CD4-positive, alpha-beta memory T cell (primary cell): ENCODE measurements at regions of chr22 and their contacts with region 1.

Region 1: GRCh38 chr22:39932918-39933649 is 27.1 kb upstream of the TMA7B start:
- DNase-seq: peak in 4 of 5 donors; percentile 55 to 61 (median 58)
- H3K4me3 ChIP-seq: no peak overlapping the region
- H3K4me3 Mint-ChIP-seq: peak overlapping the region; percentile 61 to 88 (median 79)
- H3K27ac ChIP-seq: peak overlapping the region; percentile 53
- H3K27ac Mint-ChIP-seq: peak overlapping the region in 6 of 7 donors; percentile 92 to 97 (median 96)
- H3K4me1 ChIP-seq: peaks cover 100% of the 10 kb centered on the region
- H3K4me1 Mint-ChIP-seq: peaks cover 55 to 56% (median 55%) of the 10 kb centered on the region in 4 donors
- H3K27me3 ChIP-seq: no peaks in the 10 kb centered on the region
- H3K27me3 Mint-ChIP-seq: no peaks in the 10 kb centered on the region

Region 2: DNA sequence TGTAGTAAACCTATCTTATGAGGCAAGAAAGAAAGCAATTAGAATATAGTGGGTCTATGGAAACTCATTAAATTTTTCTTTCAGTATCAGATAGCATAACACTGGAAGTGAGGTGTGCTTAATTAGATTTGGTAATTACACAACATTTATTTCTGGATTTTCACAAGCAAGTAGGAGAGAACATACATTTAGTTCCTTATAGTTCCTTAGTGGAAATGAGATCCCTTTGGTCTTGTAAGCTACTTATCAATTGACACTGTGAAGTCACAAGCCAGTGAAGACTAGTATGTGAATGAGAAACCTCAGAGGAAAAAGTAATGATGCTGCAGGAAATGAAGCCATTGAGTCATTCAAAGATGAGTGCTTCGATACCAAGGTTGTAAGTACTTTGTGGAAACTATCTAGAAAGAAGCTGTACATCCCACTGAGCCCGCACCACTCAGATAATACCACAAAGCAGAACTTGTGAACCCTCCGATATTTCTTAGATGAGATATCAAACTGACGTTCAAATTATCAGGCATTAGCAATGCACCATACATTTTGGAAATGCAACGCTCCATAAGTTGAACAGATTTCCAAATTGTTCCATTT is 93.1 kb before region 1 on chr22:
- CTCF ChIA-PET with region 1: no interaction called
- POLR2A ChIA-PET with region 1: no interaction called
- intact Hi-C with region 1: loop called (anchors 10 kb)
- DNase-seq: peak; percentile 20 to 69 (median 26)
- H3K4me3 ChIP-seq: no peak overlapping the region
- H3K4me3 Mint-ChIP-seq: peak overlapping the region in 6 of 8 donors; percentile 3 to 33 (median 17)
- H3K27ac ChIP-seq: no peak overlapping the region
- H3K27ac Mint-ChIP-seq: peak overlapping the region in 1 of 7 donors; percentile 1
- H3K4me1 ChIP-seq: peaks cover 14% of the 10 kb centered on the region
- H3K4me1 Mint-ChIP-seq: peaks cover 12 to 16% (median 15%) of the 10 kb centered on the region in 4 donors
- H3K27me3 ChIP-seq: no peaks in the 10 kb centered on the region
- H3K27me3 Mint-ChIP-seq: no peaks in the 10 kb centered on the region

Region 3: GRCh38 chr22:39859903-39860588 is 73.0 kb before region 1 on chr22:
- CTCF ChIA-PET with region 1: no interaction called
- POLR2A ChIA-PET with region 1: no interaction called
- intact Hi-C with region 1: no loop called
- DNase-seq: no peak
- H3K4me3 ChIP-seq: no peak overlapping the region
- H3K4me3 Mint-ChIP-seq: peak overlapping the region in 6 of 8 donors; percentile 7 to 45 (median 36)
- H3K27ac ChIP-seq: no peak overlapping the region
- H3K27ac Mint-ChIP-seq: peak overlapping the region in 2 of 7 donors; percentile 5 to 14
- H3K4me1 ChIP-seq: peaks cover 9% of the 10 kb centered on the region
- H3K4me1 Mint-ChIP-seq: peaks cover 11 to 20% (median 16%) of the 10 kb centered on the region in 4 donors
- H3K27me3 ChIP-seq: no peaks in the 10 kb centered on the region
- H3K27me3 Mint-ChIP-seq: peaks cover 0 to 4% of the 10 kb centered on the region in 2 donors

Region 4: DNA sequence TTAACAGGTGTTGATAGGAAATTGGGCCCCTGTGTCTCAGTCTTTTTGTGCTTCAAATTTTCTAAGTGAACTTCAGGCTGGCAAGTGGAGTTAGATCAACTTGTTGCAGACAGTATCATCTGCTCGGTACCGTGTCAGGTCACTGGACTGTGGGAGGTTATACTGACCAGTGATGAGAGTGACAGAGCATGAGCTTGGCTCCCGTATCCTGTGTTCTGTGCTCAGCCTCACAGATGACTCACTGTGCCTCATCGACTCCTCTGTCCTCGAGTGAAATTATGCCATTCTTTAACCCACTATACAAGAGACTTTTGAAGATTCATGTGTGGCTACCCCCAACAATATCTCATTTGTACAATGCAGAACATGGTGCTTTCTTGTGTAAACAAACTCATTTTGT is 24.3 kb before region 1 on chr22:
- CTCF ChIA-PET with region 1: interaction called, 15 read pairs
- POLR2A ChIA-PET with region 1: interaction called, 424 read pairs
- intact Hi-C with region 1: no loop called
- DNase-seq: peak in 1 of 5 donors; percentile 76
- H3K4me3 ChIP-seq: peak overlapping the region in 1 of 2 donors; percentile 57
- H3K4me3 Mint-ChIP-seq: peak overlapping the region; percentile 91 to 100 (median 97)
- H3K27ac ChIP-seq: peak overlapping the region; percentile 75
- H3K27ac Mint-ChIP-seq: peak overlapping the region in 6 of 7 donors; percentile 91 to 98 (median 96)
- H3K4me1 ChIP-seq: peaks cover 83% of the 10 kb centered on the region
- H3K4me1 Mint-ChIP-seq: peaks cover 53 to 89% (median 64%) of the 10 kb centered on the region in 4 donors
- H3K27me3 ChIP-seq: no peaks in the 10 kb centered on the region
- H3K27me3 Mint-ChIP-seq: no peaks in the 10 kb centered on the region

Region 5: GRCh38 chr22:39917776-39918495 is 15.1 kb before region 1 on chr22:
- CTCF ChIA-PET with region 1: interaction called, 68 read pairs
- POLR2A ChIA-PET with region 1: interaction called, 424 read pairs
- intact Hi-C with region 1: loop called (anchors 1 kb)
- DNase-seq: no peak
- H3K4me3 ChIP-seq: peak overlapping the region in 1 of 2 donors; percentile 38
- H3K4me3 Mint-ChIP-seq: peak overlapping the region; percentile 60 to 89 (median 79)
- H3K27ac ChIP-seq: peak overlapping the region; percentile 55
- H3K27ac Mint-ChIP-seq: peak overlapping the region in 6 of 7 donors; percentile 90 to 96 (median 92)
- H3K4me1 ChIP-seq: peaks cover 98% of the 10 kb centered on the region
- H3K4me1 Mint-ChIP-seq: peaks cover 78 to 99% (median 89%) of the 10 kb centered on the region in 4 donors
- H3K27me3 ChIP-seq: no peaks in the 10 kb centered on the region
- H3K27me3 Mint-ChIP-seq: peaks cover 0 to 1% of the 10 kb centered on the region in 2 donors

Region 6: GRCh38 chr22:40055143-40055883 is 122.2 kb after region 1 on chr22:
- CTCF ChIA-PET with region 1: no interaction called
- POLR2A ChIA-PET with region 1: no interaction called
- intact Hi-C with region 1: no loop called
- DNase-seq: peak; percentile 53 to 78 (median 63)
- H3K4me3 ChIP-seq: peak overlapping the region; percentile 30 to 33
- H3K4me3 Mint-ChIP-seq: peak overlapping the region; percentile 59 to 86 (median 77)
- H3K27ac ChIP-seq: peak overlapping the region; percentile 64
- H3K27ac Mint-ChIP-seq: peak overlapping the region; percentile 90 to 96 (median 93)
- H3K4me1 ChIP-seq: peaks cover 92% of the 10 kb centered on the region
- H3K4me1 Mint-ChIP-seq: peaks cover 65 to 91% (median 78%) of the 10 kb centered on the region in 4 donors
- H3K27me3 ChIP-seq: no peaks in the 10 kb centered on the region
- H3K27me3 Mint-ChIP-seq: no peaks in the 10 kb centered on the region